ENCODE measurements at regions of chr3 and their contacts with region 1.

Region 1: GRCh38 chr3:10344147-10344943 is 23.4 kb upstream of the SEC13 start:
- DNase-seq: peak in 2 of 5 donors; percentile 42 to 46
- H3K4me3 ChIP-seq: no peak overlapping the region
- H3K27ac ChIP-seq: no peak overlapping the region
- H3K4me1 ChIP-seq: no peaks in the 10 kb centered on the region
- H3K27me3 ChIP-seq: no peaks in the 10 kb centered on the region
- CTCF ChIP-seq: peak; percentile 25 to 48 (median 30)
- EP300 ChIP-seq: no peak
- POLR2A ChIP-seq: no peak

Region 2: GRCh38 chr3:10310578-10310977 is 33.8 kb before region 1 on chr3:
- intact Hi-C with region 1: no loop called
- DNase-seq: no peak
- H3K4me3 ChIP-seq: no peak overlapping the region
- H3K27ac ChIP-seq: no peak overlapping the region
- H3K4me1 ChIP-seq: no peaks in the 10 kb centered on the region
- H3K27me3 ChIP-seq: no peaks in the 10 kb centered on the region
- CTCF ChIP-seq: no peak
- EP300 ChIP-seq: no peak
- POLR2A ChIP-seq: no peak

Region 3: GRCh38 chr3:10722911-10723310 is 378.6 kb after region 1 on chr3:
- intact Hi-C with region 1: loop called in 1 of 4 experiments (anchors 10 kb)
- DNase-seq: no peak
- H3K4me3 ChIP-seq: no peak overlapping the region
- H3K27ac ChIP-seq: no peak overlapping the region
- H3K4me1 ChIP-seq: no peaks in the 10 kb centered on the region
- H3K27me3 ChIP-seq: no peaks in the 10 kb centered on the region
- CTCF ChIP-seq: no peak
- EP300 ChIP-seq: no peak
- POLR2A ChIP-seq: no peak

Measured in ovary (tissue), 10 donors.